Activated CD8-positive, alpha-beta T cell treated with anti-CD3 and anti-CD28 coated beads, Interleukin-2, amount 10 ng/mL, durations not matched to agents 7 days and 5 days (primary cell): ENCODE measurements at regions of chr15 and their contacts with region 1.

Region 1: DNA sequence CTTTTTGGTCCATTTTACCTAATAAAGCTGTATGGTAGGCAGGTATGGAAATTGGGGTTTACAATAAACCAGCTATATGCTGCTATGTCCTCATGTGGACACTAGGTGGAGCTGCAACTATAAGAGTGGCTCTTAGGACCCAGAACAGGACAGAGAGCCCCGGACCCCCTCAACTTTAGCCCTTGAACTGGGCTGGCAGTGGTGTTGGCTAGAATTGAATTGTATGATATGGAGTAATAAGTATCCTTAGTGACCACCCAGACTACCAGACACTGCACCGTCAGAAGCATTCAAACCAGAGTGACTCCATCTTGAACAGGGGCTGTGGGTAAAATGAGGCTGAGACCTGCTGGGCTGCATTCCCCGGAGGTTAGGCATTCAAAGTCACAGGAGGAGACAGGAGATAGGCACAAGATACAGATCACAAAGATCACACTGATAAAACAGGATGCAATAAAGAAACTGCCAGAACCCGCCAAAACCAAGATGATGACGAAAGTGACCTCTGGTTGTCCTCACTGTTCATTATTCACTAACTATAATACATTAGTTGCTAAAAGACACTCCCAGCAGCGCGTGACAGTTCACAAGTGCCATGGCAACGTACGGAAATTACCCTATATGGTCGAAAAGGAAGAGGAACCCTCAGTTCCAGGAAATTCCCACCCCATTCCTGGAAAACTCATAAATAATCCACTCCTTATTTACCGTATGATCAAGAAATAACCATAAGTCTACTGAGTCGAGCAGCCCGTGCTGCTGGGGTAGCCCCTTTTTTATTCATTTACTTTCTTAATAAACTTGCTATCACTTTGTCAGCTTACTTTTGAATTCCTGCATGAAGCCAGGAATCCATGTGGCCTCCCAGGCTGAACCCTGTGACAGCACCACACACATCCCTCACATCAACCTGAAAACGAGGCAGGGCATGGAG is 68.7 kb upstream of the BLM start:
- DNase-seq: peak; percentile 89
- ATAC-seq: peak; percentile 80
- H3K4me3 Mint-ChIP-seq: peak overlapping the region; percentile 64
- H3K27ac Mint-ChIP-seq: peak overlapping the region; percentile 99
- H3K4me1 Mint-ChIP-seq: peaks cover 51% of the 10 kb centered on the region
- H3K27me3 Mint-ChIP-seq: no peaks in the 10 kb centered on the region

Region 2: GRCh38 chr15:90665288-90666134 is 17.1 kb after region 1 on chr15:
- CTCF ChIA-PET with region 1: interaction called, 28 read pairs
- POLR2A ChIA-PET with region 1: interaction called, 17 read pairs
- DNase-seq: peak; percentile 85
- ATAC-seq: peak; percentile 79
- H3K4me3 Mint-ChIP-seq: peak overlapping the region; percentile 84
- H3K27ac Mint-ChIP-seq: peak overlapping the region; percentile 98
- H3K4me1 Mint-ChIP-seq: peaks cover 64% of the 10 kb centered on the region
- H3K27me3 Mint-ChIP-seq: peaks cover 1% of the 10 kb centered on the region

Region 3: GRCh38 chr15:90686435-90687218 is 38.2 kb after region 1 on chr15:
- CTCF ChIA-PET with region 1: interaction called, 19 read pairs
- POLR2A ChIA-PET with region 1: interaction called, 4 read pairs
- DNase-seq: peak; percentile 74
- ATAC-seq: peak; percentile 94
- H3K4me3 Mint-ChIP-seq: peak overlapping the region; percentile 47
- H3K27ac Mint-ChIP-seq: peak overlapping the region; percentile 98
- H3K4me1 Mint-ChIP-seq: peaks cover 60% of the 10 kb centered on the region
- H3K27me3 Mint-ChIP-seq: no peaks in the 10 kb centered on the region

Region 4: GRCh38 chr15:90701880-90702630 is 53.7 kb after region 1 on chr15:
- CTCF ChIA-PET with region 1: interaction called, 18 read pairs
- POLR2A ChIA-PET with region 1: interaction called, 3 read pairs
- DNase-seq: no peak
- ATAC-seq: no peak
- H3K4me3 Mint-ChIP-seq: no peak overlapping the region
- H3K27ac Mint-ChIP-seq: no peak overlapping the region
- H3K4me1 Mint-ChIP-seq: peaks cover 10% of the 10 kb centered on the region
- H3K27me3 Mint-ChIP-seq: no peaks in the 10 kb centered on the region